Activated CD8-positive, alpha-beta memory T cell treated with anti-CD3 and anti-CD28 coated beads, Interleukin-2, amount 10 ng/mL, durations not matched to agents 7 days and 5 days (primary cell): ENCODE measurements at regions of chr17 and their contacts with region 1.

Region 1: GRCh38 chr17:49191917-49192741 is 18.2 kb downstream of the GNGT2 start:
- DNase-seq: peak; percentile 95
- ATAC-seq: peak; percentile 56
- H3K4me3 Mint-ChIP-seq: peak overlapping the region; percentile 88
- H3K27ac Mint-ChIP-seq: peak overlapping the region; percentile 97
- H3K4me1 Mint-ChIP-seq: peaks cover 53% of the 10 kb centered on the region
- H3K27me3 Mint-ChIP-seq: no peaks in the 10 kb centered on the region

Region 2: GRCh38 chr17:49086649-49087048 is 105.5 kb before region 1 on chr17:
- CTCF ChIA-PET with region 1: no interaction called
- DNase-seq: no peak
- ATAC-seq: no peak
- H3K4me3 Mint-ChIP-seq: no peak overlapping the region
- H3K27ac Mint-ChIP-seq: no peak overlapping the region
- H3K4me1 Mint-ChIP-seq: peaks cover 4% of the 10 kb centered on the region
- H3K27me3 Mint-ChIP-seq: peaks cover 24% of the 10 kb centered on the region

Region 3: DNA sequence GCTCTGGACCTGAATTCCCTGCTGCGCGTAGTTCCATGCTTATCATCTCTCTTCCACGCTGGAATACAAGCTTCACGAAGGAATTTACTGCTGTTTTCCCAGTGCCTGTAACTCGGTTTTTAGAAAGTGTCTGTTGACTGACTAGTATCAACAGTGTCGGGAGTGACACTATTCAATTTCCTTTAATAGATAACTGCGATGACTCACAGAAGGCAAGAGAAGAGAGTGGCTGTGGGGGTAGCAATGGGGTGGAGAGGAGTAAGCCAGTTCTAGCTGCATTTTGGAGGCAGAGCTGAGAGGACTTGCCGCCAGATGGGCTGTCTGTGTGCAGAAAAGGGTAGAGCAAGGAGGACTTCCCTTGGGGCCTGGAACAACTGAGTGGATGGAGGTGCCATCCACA is 34.3 kb before region 1 on chr17:
- CTCF ChIA-PET with region 1: no interaction called
- DNase-seq: no peak
- ATAC-seq: no peak
- H3K4me3 Mint-ChIP-seq: no peak overlapping the region
- H3K27ac Mint-ChIP-seq: no peak overlapping the region
- H3K4me1 Mint-ChIP-seq: no peaks in the 10 kb centered on the region
- H3K27me3 Mint-ChIP-seq: peaks cover 45% of the 10 kb centered on the region

Region 4: DNA sequence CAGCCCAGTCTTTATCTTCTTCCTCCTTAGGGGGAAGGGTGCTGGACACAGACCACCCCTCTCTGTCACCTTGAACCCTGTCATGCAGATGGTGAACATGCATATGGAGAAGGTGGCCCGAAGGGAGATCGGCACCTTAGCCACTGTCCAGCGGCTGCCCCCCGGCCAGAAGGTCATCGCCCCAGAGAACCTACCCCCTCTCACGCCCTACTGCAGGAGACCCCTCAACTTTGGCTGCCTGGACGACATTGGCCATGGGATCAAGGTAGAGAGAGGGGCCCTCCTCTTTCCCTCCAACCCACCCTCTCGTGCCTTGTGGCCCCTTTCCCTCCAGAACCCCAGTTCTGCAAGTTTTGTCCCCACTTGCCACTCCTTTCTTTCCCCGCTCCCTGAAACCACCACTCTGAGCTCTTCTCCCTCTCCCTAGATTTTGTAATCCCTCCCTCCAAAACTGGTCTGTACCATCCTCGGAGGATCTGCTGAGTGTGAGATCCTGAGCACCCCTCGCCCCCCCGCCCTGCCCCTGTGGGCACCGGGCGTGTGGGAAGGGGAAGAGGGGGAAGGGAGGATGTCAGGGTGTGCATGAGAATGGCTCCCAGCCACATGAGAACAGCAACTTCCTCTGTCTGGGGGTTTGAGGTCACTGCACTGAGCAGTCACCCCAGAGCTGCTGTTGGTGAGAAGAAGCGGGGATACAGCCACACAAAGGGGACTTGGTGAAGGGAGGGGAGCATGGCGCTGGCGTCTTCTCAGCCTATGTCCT is 25.7 kb after region 1 on chr17:
- CTCF ChIA-PET with region 1: interaction called, 32 read pairs
- DNase-seq: peak; percentile 93
- ATAC-seq: peak; percentile 61
- H3K4me3 Mint-ChIP-seq: peak overlapping the region; percentile 65
- H3K27ac Mint-ChIP-seq: peak overlapping the region; percentile 98
- H3K4me1 Mint-ChIP-seq: peaks cover 80% of the 10 kb centered on the region
- H3K27me3 Mint-ChIP-seq: no peaks in the 10 kb centered on the region

Region 5: GRCh38 chr17:49230636-49231562 is 38.8 kb after region 1 on chr17 and contains the start of gene PHOSPHO1:
- CTCF ChIA-PET with region 1: interaction called, 132 read pairs
- DNase-seq: peak; percentile 90
- ATAC-seq: peak; percentile 91
- H3K4me3 Mint-ChIP-seq: peak within 1 kb of the TSS; percentile 62
- H3K27ac Mint-ChIP-seq: no peak within 1 kb of the TSS
- H3K4me1 Mint-ChIP-seq: peaks cover 34% of the 10 kb centered on the region
- H3K27me3 Mint-ChIP-seq: peaks cover 30% of the 10 kb centered on the region
- total RNA-seq, gene PHOSPHO1: not detected